CD8-positive, alpha-beta T cell (primary cell): ENCODE measurements at regions of chr10 and their contacts with region 1.

Region 1: DNA sequence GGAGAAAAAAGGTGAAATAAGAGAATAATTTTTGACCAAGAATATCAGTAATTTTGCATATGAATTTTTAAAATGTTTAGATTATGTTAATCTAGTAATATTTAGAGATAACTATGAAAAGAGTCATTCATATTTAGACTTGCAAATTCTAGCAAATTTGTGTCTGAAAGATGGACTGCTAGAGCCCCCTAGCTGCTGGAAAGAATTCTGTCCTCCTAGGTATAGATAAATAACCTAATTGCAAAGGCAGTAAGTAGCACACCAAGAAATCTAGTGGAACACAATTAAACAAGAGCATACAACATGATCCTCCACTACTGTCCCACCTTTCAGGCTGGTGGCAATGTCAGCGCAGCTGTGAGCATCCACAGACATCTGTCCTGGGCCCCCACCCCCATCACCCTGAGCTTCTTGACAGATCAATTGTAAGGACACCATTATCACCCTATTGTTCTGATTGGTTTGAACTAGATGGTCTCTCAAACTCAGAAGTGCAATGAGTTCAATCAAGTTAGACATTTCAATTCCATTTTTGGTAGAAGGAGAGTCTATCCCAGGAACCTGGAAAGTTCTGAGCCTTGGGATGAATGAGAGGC is 15.0 kb upstream of the GFRA1 start:
- DNase-seq: peak in 2 of 9 experiments; percentile 4 to 44
- ATAC-seq: no peak
- H3K4me3 ChIP-seq: no peak overlapping the region
- H3K4me3 Mint-ChIP-seq: no peak overlapping the region
- H3K27ac ChIP-seq: no peak overlapping the region
- H3K27ac Mint-ChIP-seq: no peak overlapping the region
- H3K4me1 ChIP-seq: no peaks in the 10 kb centered on the region
- H3K4me1 Mint-ChIP-seq: no peaks in the 10 kb centered on the region
- H3K27me3 ChIP-seq: peaks cover 0 to 3% of the 10 kb centered on the region in 2 experiments
- H3K27me3 Mint-ChIP-seq: peaks cover 5% of the 10 kb centered on the region
- CTCF ChIP-seq: no peak

Region 2: GRCh38 chr10:115171392-115171960 is 1116.5 kb before region 1 on chr10:
- CTCF ChIA-PET with region 1: interaction called, 3 read pairs
- POLR2A ChIA-PET with region 1: no interaction called
- intact Hi-C with region 1: loop called in 1 of 2 experiments (anchors 5 kb)
- DNase-seq: no peak
- ATAC-seq: no peak
- H3K4me3 ChIP-seq: no peak overlapping the region
- H3K4me3 Mint-ChIP-seq: no peak overlapping the region
- H3K27ac ChIP-seq: no peak overlapping the region
- H3K27ac Mint-ChIP-seq: no peak overlapping the region
- H3K4me1 ChIP-seq: no peaks in the 10 kb centered on the region
- H3K4me1 Mint-ChIP-seq: no peaks in the 10 kb centered on the region
- H3K27me3 ChIP-seq: no peaks in the 10 kb centered on the region
- H3K27me3 Mint-ChIP-seq: peaks cover 5% of the 10 kb centered on the region
- CTCF ChIP-seq: no peak

Region 3: DNA sequence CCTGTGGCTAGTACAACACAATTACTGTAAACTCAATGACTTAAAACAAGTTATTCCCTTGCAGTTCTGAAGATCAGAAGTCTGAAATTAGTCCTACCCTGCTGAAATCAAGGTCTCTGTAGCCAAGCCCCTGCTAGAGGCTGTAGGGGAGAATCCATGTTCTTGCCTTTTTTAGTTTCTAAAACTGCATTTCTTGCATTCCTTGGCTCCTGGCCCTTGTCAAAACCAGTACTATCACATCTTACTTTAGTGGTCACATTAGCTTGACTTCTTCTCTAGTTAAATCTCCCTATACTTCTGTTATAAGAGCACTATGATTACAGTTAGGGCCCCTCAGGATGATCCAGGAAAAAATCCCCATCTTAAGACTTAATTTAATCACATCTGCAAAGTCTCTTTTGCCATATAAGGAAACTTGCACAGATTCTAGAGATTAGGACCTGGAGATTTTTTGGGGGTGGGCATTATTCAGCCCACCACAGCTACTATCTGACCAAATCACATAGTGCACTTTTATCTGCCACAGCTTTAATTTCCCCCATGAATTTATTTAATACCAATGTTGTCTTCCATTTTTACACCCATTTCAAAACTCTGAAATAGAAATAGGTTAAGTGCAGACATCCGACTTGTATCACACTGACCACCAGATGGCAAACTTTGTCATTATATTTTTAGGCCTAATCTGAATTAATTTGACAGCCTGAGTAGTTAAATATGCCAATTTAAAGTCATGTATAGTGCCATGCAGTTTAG is 581.8 kb before region 1 on chr10:
- CTCF ChIA-PET with region 1: no interaction called
- POLR2A ChIA-PET with region 1: no interaction called
- intact Hi-C with region 1: loop called (anchors 5 to 10 kb)
- DNase-seq: peak in 1 of 9 experiments; percentile 16
- ATAC-seq: no peak
- H3K4me3 ChIP-seq: no peak overlapping the region
- H3K4me3 Mint-ChIP-seq: no peak overlapping the region
- H3K27ac ChIP-seq: no peak overlapping the region
- H3K27ac Mint-ChIP-seq: no peak overlapping the region
- H3K4me1 ChIP-seq: no peaks in the 10 kb centered on the region
- H3K4me1 Mint-ChIP-seq: no peaks in the 10 kb centered on the region
- H3K27me3 ChIP-seq: no peaks in the 10 kb centered on the region
- H3K27me3 Mint-ChIP-seq: no peaks in the 10 kb centered on the region
- CTCF ChIP-seq: no peak

Region 4: GRCh38 chr10:115795964-115796363 is 492.0 kb before region 1 on chr10:
- CTCF ChIA-PET with region 1: no interaction called
- POLR2A ChIA-PET with region 1: no interaction called
- intact Hi-C with region 1: loop called in 1 of 2 experiments (anchors 5 kb)
- DNase-seq: no peak
- ATAC-seq: no peak
- H3K4me3 ChIP-seq: no peak overlapping the region
- H3K4me3 Mint-ChIP-seq: no peak overlapping the region
- H3K27ac ChIP-seq: no peak overlapping the region
- H3K27ac Mint-ChIP-seq: no peak overlapping the region
- H3K4me1 ChIP-seq: no peaks in the 10 kb centered on the region
- H3K4me1 Mint-ChIP-seq: no peaks in the 10 kb centered on the region
- H3K27me3 ChIP-seq: no peaks in the 10 kb centered on the region
- H3K27me3 Mint-ChIP-seq: peaks cover 1% of the 10 kb centered on the region
- CTCF ChIP-seq: no peak

Region 5: GRCh38 chr10:116915340-116915739 is 627.3 kb after region 1 on chr10:
- CTCF ChIA-PET with region 1: no interaction called
- POLR2A ChIA-PET with region 1: no interaction called
- intact Hi-C with region 1: no loop called
- DNase-seq: no peak
- ATAC-seq: no peak
- H3K4me3 ChIP-seq: no peak overlapping the region
- H3K4me3 Mint-ChIP-seq: no peak overlapping the region
- H3K27ac ChIP-seq: no peak overlapping the region
- H3K27ac Mint-ChIP-seq: no peak overlapping the region
- H3K4me1 ChIP-seq: no peaks in the 10 kb centered on the region
- H3K4me1 Mint-ChIP-seq: no peaks in the 10 kb centered on the region
- H3K27me3 ChIP-seq: no peaks in the 10 kb centered on the region
- H3K27me3 Mint-ChIP-seq: peaks cover 5% of the 10 kb centered on the region
- CTCF ChIP-seq: no peak